ENCODE measurements at regions of chr13 and their contacts with region 1.

Region 1: GRCh38 chr13:24220086-24220703 is 59.7 kb downstream of the SPATA13 start:
- DNase-seq: peak; percentile 55
- H3K4me3 Mint-ChIP-seq: no peak overlapping the region
- H3K27ac Mint-ChIP-seq: no peak overlapping the region
- H3K4me1 Mint-ChIP-seq: peaks cover 64% of the 10 kb centered on the region
- H3K27me3 Mint-ChIP-seq: no peaks in the 10 kb centered on the region

Region 2: GRCh38 chr13:23466144-23467002 is 753.8 kb before region 1 on chr13:
- intact Hi-C with region 1: loop called (anchors 10 kb)
- DNase-seq: peak; percentile 40
- H3K4me3 Mint-ChIP-seq: peak overlapping the region; percentile 68
- H3K27ac Mint-ChIP-seq: peak overlapping the region; percentile 21
- H3K4me1 Mint-ChIP-seq: peaks cover 5% of the 10 kb centered on the region
- H3K27me3 Mint-ChIP-seq: peaks cover 22% of the 10 kb centered on the region

Region 3: DNA sequence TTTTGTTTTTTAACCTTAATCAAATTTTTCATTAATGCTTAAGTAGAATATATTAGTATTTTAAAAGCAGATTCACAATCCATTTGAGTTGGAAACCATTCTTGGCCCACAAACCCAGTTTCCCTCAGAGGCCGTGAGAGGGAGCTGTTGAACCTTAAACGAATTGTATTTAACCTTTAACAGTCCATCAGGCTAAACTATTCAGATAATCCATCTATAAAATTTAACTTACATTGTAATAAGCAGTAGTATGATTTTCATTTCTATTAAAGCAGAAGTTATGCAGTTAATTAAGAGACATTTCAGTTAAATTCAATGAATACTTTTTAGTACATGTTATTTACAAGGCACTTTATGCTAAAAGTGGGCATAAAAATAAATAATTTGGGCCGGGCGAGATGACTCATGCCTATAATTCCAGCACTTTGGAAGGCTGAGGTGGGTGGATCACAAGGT is 199.8 kb before region 1 on chr13:
- intact Hi-C with region 1: loop called (anchors 1 kb)
- DNase-seq: no peak
- H3K4me3 Mint-ChIP-seq: no peak overlapping the region
- H3K27ac Mint-ChIP-seq: no peak overlapping the region
- H3K4me1 Mint-ChIP-seq: peaks cover 6% of the 10 kb centered on the region
- H3K27me3 Mint-ChIP-seq: peaks cover 1% of the 10 kb centered on the region

Region 4: GRCh38 chr13:24053519-24054251 is 166.5 kb before region 1 on chr13:
- intact Hi-C with region 1: loop called (anchors 1 kb)
- DNase-seq: peak; percentile 55
- H3K4me3 Mint-ChIP-seq: no peak overlapping the region
- H3K27ac Mint-ChIP-seq: no peak overlapping the region
- H3K4me1 Mint-ChIP-seq: peaks cover 20% of the 10 kb centered on the region
- H3K27me3 Mint-ChIP-seq: peaks cover 15% of the 10 kb centered on the region

Region 5: DNA sequence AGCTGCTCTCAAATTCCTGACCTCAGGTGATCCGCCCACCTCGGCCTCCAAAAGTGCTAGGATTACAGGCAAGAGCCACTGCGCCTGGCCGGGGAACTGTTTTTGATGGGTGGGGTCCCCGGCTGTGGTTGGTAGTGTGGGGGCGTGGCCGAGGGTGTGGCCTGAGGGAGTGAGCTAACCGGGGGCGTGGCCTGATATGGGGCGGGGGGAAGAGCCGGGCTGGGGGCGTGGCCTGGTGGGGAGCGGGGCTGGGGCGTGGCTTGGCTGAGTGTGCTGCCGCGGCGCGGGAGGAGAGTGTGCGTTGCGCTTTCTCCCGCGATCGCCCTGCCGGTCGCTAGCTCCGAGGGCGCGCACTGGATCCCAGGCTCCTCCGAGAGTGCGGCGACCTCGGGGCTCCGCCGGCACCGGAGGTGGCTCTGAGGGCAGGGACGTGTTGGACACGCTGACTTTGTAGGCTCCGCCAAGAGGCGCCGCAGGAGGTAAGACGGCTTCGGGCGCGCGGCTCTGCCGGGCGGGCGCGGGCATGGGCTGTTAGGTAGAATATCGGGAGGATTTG is 59.7 kb before region 1 on chr13 and contains the start of gene SPATA13:
- intact Hi-C with region 1: loop called (anchors 1 kb)
- DNase-seq: peak; percentile 86
- H3K4me3 Mint-ChIP-seq: peak within 1 kb of the TSS; percentile 92
- H3K27ac Mint-ChIP-seq: peak within 1 kb of the TSS; percentile 76
- H3K4me1 Mint-ChIP-seq: peaks cover 26% of the 10 kb centered on the region
- H3K27me3 Mint-ChIP-seq: peaks cover 7% of the 10 kb centered on the region
- total RNA-seq, gene SPATA13: 56.2 and 56.3 TPM in 2 replicates

Region 6: GRCh38 chr13:24270639-24271141 is 50.5 kb after region 1 on chr13:
- intact Hi-C with region 1: no loop called
- DNase-seq: peak; percentile 54
- H3K4me3 Mint-ChIP-seq: peak overlapping the region; percentile 88
- H3K27ac Mint-ChIP-seq: peak overlapping the region; percentile 93
- H3K4me1 Mint-ChIP-seq: peaks cover 82% of the 10 kb centered on the region
- H3K27me3 Mint-ChIP-seq: no peaks in the 10 kb centered on the region

Measured in activated T-helper 1 cell treated with anti-CD3 and anti-CD28 coated beads, Interleukin-12 subunit alpha, Interleukin-12 subunit beta, Interleukin-2, Interleukin-4 antibody, amounts not matched to agents 30 ng/mL and 10 ng/mL and 1 ng/mL, durations not matched to agents 14 hours and 24 hours and 36 hours (primary cell).